Activated naive CD4-positive, alpha-beta T cell treated with anti-CD3 and anti-CD28 coated beads for 36 hours (primary cell): ENCODE measurements at regions of chr4 and their contacts with region 1.

Region 1: DNA sequence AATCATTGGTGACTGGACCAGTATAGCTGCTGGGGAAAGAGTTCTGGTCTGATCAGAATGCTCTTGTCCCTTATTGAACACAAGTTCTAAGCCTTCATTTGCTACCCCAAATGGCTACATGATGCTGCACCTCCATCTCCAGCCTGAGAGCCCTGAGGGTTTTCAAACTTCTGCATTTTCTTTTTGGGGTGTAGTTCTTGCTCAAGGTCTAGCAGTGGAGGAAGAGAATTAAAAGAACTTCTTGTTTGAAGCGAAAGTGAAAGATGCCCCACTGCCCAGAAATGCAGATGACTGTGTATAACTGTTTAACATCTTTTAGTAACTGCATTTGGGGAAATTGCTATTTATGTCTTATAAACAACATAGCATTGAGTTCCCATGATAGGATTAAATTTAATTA is 38.5 kb downstream of the LAMTOR3 start:
- DNase-seq: peak; percentile 43
- H3K4me3 Mint-ChIP-seq: no peak overlapping the region
- H3K27ac Mint-ChIP-seq: peak overlapping the region; percentile 74
- H3K4me1 Mint-ChIP-seq: peaks cover 66% of the 10 kb centered on the region
- H3K27me3 Mint-ChIP-seq: no peaks in the 10 kb centered on the region

Region 2: DNA sequence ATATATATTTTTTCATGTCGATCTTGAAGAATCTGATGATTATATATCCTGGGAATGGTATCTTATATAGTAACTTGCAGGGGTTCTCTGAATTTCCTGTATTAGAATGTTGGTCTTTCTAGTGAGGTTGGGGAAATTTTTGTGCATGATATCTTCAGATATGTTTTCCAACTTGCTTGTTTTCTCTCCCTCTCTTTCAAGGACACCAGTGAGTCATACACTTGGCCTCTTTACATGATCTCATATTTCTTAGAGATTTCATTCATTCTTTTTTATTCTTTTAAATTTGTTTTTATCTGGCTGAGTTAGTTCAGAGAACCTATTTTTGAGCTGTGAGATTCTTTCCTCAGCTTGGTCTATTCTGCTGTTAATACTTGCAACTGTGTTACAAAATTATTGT is 372.0 kb before region 1 on chr4:
- CTCF ChIA-PET with region 1: no interaction called
- intact Hi-C with region 1: no loop called
- DNase-seq: no peak
- H3K4me3 Mint-ChIP-seq: no peak overlapping the region
- H3K27ac Mint-ChIP-seq: no peak overlapping the region
- H3K4me1 Mint-ChIP-seq: no peaks in the 10 kb centered on the region
- H3K27me3 Mint-ChIP-seq: no peaks in the 10 kb centered on the region

Region 3: GRCh38 chr4:99710681-99711345 is 144.9 kb before region 1 on chr4:
- CTCF ChIA-PET with region 1: no interaction called
- intact Hi-C with region 1: loop called (anchors 5 kb)
- DNase-seq: peak; percentile 33
- H3K4me3 Mint-ChIP-seq: no peak overlapping the region
- H3K27ac Mint-ChIP-seq: no peak overlapping the region
- H3K4me1 Mint-ChIP-seq: peaks cover 8% of the 10 kb centered on the region
- H3K27me3 Mint-ChIP-seq: peaks cover 7% of the 10 kb centered on the region

Region 4: DNA sequence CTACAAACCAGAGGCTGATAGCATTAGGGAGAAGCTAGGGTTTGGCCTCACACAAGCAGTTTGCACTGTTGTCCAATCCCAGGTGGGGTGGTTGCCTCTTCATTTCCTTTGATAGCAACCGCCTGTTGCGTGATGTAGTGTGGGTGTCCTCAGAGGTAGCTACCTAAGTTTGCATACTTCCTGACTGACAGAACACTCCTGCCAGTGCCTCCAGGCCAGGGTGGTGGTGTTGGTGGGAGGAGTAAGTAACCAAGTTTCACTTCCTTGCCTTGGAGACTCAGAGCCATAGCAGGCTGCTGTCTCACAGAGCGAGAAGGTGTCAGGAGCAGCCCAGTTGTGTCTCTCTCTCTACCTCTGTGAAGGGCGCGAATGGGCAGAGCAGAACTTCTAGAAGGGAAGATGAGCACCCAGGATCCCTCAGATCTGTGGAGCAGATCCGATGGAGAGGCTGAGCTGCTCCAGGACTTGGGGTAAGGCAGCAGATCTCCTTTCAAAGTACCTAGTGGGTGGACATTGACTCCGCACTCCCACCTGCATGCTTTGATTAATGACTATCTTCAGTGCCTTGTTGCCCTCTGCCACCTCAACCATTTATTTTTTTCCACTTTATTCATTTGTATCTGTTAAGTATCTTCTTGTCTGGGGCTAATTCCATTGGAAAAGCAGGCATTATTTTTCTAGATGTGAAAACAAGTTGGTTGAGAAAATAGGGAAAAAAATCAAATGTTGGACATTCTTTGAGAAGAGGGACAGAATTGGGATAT is 39.0 kb before region 1 on chr4 and contains the start of gene DAPP1:
- CTCF ChIA-PET with region 1: interaction called, 18 read pairs
- intact Hi-C with region 1: loop called (anchors 1 kb)
- DNase-seq: peak; percentile 87
- H3K4me3 Mint-ChIP-seq: peak within 1 kb of the TSS; percentile 76
- H3K27ac Mint-ChIP-seq: peak within 1 kb of the TSS; percentile 94
- H3K4me1 Mint-ChIP-seq: peaks cover 71% of the 10 kb centered on the region
- H3K27me3 Mint-ChIP-seq: no peaks in the 10 kb centered on the region
- total RNA-seq, gene DAPP1: 24.4 to 25.8 TPM

Region 5: GRCh38 chr4:99921174-99921573 is 65.5 kb after region 1 on chr4:
- CTCF ChIA-PET with region 1: no interaction called
- intact Hi-C with region 1: loop called (anchors 2 kb)
- DNase-seq: peak; percentile 41
- H3K4me3 Mint-ChIP-seq: no peak overlapping the region
- H3K27ac Mint-ChIP-seq: peak overlapping the region; percentile 39
- H3K4me1 Mint-ChIP-seq: peaks cover 19% of the 10 kb centered on the region
- H3K27me3 Mint-ChIP-seq: no peaks in the 10 kb centered on the region

Region 6: DNA sequence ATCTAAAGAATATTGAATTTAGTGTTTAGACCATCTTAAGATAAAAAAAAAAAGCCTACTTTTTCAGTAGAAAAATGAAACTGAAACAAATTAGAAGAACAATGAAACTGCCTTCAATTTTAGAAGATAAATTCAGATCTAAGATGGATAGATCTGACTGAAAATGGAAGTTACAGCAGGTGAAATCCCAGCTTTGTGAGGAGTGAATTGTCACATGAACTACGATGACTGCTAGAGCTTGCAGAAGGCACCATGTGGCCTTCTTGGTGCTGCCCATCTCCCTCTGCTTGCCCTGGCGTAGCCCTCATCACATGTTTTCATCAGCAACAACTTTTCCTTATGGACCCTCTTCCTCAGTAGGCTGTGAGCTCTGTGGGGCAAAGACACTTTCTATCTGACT is 713.5 kb after region 1 on chr4:
- CTCF ChIA-PET with region 1: no interaction called
- intact Hi-C with region 1: loop called (anchors 10 kb)
- DNase-seq: peak; percentile 26
- H3K4me3 Mint-ChIP-seq: no peak overlapping the region
- H3K27ac Mint-ChIP-seq: peak overlapping the region; percentile 59
- H3K4me1 Mint-ChIP-seq: peaks cover 21% of the 10 kb centered on the region
- H3K27me3 Mint-ChIP-seq: peaks cover 2% of the 10 kb centered on the region

Region 7: GRCh38 chr4:101037938-101038413 is 1182.3 kb after region 1 on chr4:
- CTCF ChIA-PET with region 1: no interaction called
- intact Hi-C with region 1: loop called (anchors 5 kb)
- DNase-seq: no peak
- H3K4me3 Mint-ChIP-seq: no peak overlapping the region
- H3K27ac Mint-ChIP-seq: no peak overlapping the region
- H3K4me1 Mint-ChIP-seq: peaks cover 13% of the 10 kb centered on the region
- H3K27me3 Mint-ChIP-seq: no peaks in the 10 kb centered on the region